ENCODE measurements at regions of chr11 and their contacts with region 1.

Region 1: GRCh38 chr11:125941619-125942611 is 3.9 kb upstream of the VSIG10L2 start:
- DNase-seq: peak in 7 of 9 experiments; percentile 19 to 53 (median 43)
- ATAC-seq: no peak
- H3K4me3 ChIP-seq: no peak overlapping the region
- H3K4me3 Mint-ChIP-seq: no peak overlapping the region
- H3K27ac ChIP-seq: no peak overlapping the region
- H3K27ac Mint-ChIP-seq: no peak overlapping the region
- H3K4me1 ChIP-seq: peaks cover 5% of the 10 kb centered on the region
- H3K4me1 Mint-ChIP-seq: peaks cover 12% of the 10 kb centered on the region
- H3K27me3 ChIP-seq: no peaks in the 10 kb centered on the region
- H3K27me3 Mint-ChIP-seq: no peaks in the 10 kb centered on the region
- CTCF ChIP-seq: peak; percentile 60

Region 2: GRCh38 chr11:126188332-126189108 is 246.6 kb after region 1 on chr11:
- CTCF ChIA-PET with region 1: interaction called, 32 read pairs
- POLR2A ChIA-PET with region 1: no interaction called
- intact Hi-C with region 1: no loop called
- DNase-seq: no peak
- ATAC-seq: no peak
- H3K4me3 ChIP-seq: no peak overlapping the region
- H3K4me3 Mint-ChIP-seq: no peak overlapping the region
- H3K27ac ChIP-seq: no peak overlapping the region
- H3K27ac Mint-ChIP-seq: no peak overlapping the region
- H3K4me1 ChIP-seq: no peaks in the 10 kb centered on the region
- H3K4me1 Mint-ChIP-seq: no peaks in the 10 kb centered on the region
- H3K27me3 ChIP-seq: no peaks in the 10 kb centered on the region
- H3K27me3 Mint-ChIP-seq: no peaks in the 10 kb centered on the region
- CTCF ChIP-seq: no peak

Region 3: GRCh38 chr11:126194121-126194543 is 252.2 kb after region 1 on chr11:
- CTCF ChIA-PET with region 1: interaction called, 32 read pairs
- POLR2A ChIA-PET with region 1: no interaction called
- intact Hi-C with region 1: loop called (anchors 1 kb)
- DNase-seq: peak in 5 of 9 experiments; percentile 12 to 52 (median 37)
- ATAC-seq: no peak
- H3K4me3 ChIP-seq: no peak overlapping the region
- H3K4me3 Mint-ChIP-seq: no peak overlapping the region
- H3K27ac ChIP-seq: no peak overlapping the region
- H3K27ac Mint-ChIP-seq: no peak overlapping the region
- H3K4me1 ChIP-seq: no peaks in the 10 kb centered on the region
- H3K4me1 Mint-ChIP-seq: no peaks in the 10 kb centered on the region
- H3K27me3 ChIP-seq: no peaks in the 10 kb centered on the region
- H3K27me3 Mint-ChIP-seq: no peaks in the 10 kb centered on the region
- CTCF ChIP-seq: peak; percentile 70

Region 4: DNA sequence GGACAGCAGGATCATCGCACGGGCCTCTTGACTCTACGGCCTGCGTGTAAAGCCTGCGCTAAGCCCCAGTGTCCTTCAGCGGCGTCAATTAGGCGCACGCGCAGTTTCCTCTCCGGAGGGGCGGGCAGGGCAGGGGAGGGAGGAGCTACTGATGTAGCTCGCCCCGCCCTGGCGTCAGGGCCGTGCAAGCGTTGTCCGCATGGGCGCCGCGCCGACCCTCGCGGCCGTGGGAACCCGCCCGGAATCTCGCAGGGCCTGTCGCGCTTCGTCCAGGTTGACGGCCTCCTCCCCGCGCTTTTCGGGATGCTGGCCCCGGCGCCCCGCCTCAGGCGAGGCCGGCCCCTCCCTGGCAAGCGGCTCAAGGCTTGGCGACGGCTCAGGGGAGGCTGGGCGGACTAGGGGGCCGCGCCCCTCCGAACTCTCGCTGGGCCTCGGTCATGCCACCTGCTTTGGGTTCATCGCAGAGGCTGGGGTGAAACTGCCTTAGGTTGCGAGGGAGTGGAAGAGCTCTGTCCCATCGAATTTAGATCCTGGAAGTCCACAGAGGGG is 474.7 kb after region 1 on chr11:
- CTCF ChIA-PET with region 1: no interaction called
- POLR2A ChIA-PET with region 1: no interaction called
- intact Hi-C with region 1: no loop called
- DNase-seq: peak; percentile 20 to 82 (median 67)
- ATAC-seq: peak; percentile 98
- H3K4me3 ChIP-seq: peak overlapping the region; percentile 40 to 49
- H3K4me3 Mint-ChIP-seq: peak overlapping the region; percentile 71
- H3K27ac ChIP-seq: no peak overlapping the region
- H3K27ac Mint-ChIP-seq: no peak overlapping the region
- H3K4me1 ChIP-seq: peaks cover 7% of the 10 kb centered on the region
- H3K4me1 Mint-ChIP-seq: peaks cover 12% of the 10 kb centered on the region
- H3K27me3 ChIP-seq: no peaks in the 10 kb centered on the region
- H3K27me3 Mint-ChIP-seq: peaks cover 2% of the 10 kb centered on the region
- CTCF ChIP-seq: no peak

Measured in CD8-positive, alpha-beta T cell (primary cell).